CD4-positive, alpha-beta memory T cell (primary cell): ENCODE measurements at regions of chr15 and their contacts with region 1.

Region 1: GRCh38 chr15:64430000-64430735 is 30.2 kb upstream of the ZNF609 start:
- DNase-seq: peak; percentile 75 to 85 (median 79)
- H3K4me3 ChIP-seq: peak overlapping the region; percentile 18 to 25
- H3K4me3 Mint-ChIP-seq: peak overlapping the region; percentile 56 to 79 (median 76)
- H3K27ac ChIP-seq: peak overlapping the region; percentile 44
- H3K27ac Mint-ChIP-seq: peak overlapping the region; percentile 87 to 97 (median 91)
- H3K4me1 ChIP-seq: peaks cover 47% of the 10 kb centered on the region
- H3K4me1 Mint-ChIP-seq: peaks cover 31 to 49% (median 45%) of the 10 kb centered on the region in 4 donors
- H3K27me3 ChIP-seq: no peaks in the 10 kb centered on the region
- H3K27me3 Mint-ChIP-seq: no peaks in the 10 kb centered on the region

Region 2: DNA sequence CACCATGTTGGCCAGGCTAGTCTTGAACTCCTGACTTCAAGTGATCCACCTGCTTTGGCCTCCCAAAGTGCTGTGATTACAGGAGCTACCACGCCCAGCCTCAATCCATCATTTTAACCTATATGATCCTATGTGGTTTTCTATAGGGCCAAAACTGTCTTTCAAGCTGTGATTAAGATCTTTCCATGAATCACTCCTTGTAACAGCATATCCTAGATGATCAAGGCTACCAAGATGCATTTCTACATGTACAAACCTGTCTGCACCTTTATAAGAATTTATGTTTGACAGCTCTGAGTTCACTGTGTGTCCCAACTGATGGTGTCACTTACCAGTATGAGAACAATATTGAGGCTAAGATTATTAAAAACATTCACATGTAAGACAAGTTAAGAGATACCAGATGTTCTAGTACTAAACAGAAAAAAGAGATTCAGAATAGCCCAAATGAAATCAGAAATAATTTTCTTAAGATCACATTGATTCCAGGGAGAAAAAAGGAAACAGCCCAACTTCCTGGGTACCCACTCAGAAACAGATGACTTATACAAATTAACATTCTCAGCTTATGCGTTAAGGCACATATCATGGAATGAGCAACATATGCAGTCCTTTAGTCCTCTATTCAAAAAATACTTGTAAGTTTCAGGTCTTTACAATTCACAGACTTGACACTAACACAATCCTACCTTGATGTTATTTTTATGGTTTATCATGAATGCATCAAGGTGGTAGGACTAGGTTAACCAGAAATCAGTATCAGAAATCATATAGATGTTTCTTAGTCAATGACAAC is 242.6 kb before region 1 on chr15:
- CTCF ChIA-PET with region 1: no interaction called
- POLR2A ChIA-PET with region 1: no interaction called
- intact Hi-C with region 1: no loop called
- DNase-seq: no peak
- H3K4me3 ChIP-seq: no peak overlapping the region
- H3K4me3 Mint-ChIP-seq: peak overlapping the region in 6 of 8 donors; percentile 55 to 79 (median 69)
- H3K27ac ChIP-seq: no peak overlapping the region
- H3K27ac Mint-ChIP-seq: peak overlapping the region in 5 of 7 donors; percentile 37 to 83 (median 74)
- H3K4me1 ChIP-seq: no peaks in the 10 kb centered on the region
- H3K4me1 Mint-ChIP-seq: peaks cover 7 to 18% (median 10%) of the 10 kb centered on the region in 4 donors
- H3K27me3 ChIP-seq: no peaks in the 10 kb centered on the region
- H3K27me3 Mint-ChIP-seq: no peaks in the 10 kb centered on the region

Region 3: DNA sequence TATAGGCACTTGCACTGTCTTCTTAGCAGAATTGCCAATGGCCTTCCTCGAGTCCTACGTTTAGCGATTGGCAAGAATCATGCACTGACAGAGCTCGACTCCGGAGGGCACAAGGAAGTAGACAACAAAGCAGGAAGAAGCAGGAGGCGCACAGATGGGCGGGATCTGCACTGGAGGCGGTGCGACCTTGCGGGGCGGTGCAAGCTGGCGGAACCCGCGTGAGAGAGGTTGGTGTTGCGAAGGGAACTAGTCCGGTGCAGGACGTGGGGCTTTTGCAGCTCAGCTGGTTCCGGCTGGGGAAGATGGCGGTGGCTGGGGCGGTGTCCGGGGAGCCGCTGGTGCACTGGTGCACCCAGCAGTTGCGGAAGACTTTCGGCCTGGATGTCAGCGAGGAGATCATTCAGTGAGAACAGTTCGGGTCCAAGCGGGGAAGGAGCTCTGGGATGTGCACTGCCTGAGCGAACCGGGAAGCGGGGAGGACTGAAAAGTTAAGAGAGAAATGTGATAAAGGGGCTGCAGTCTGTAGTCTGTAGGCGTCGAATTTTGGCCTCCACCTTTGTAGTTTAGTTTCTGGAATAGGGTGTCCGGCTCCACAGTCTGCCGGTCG is 42.5 kb before region 1 on chr15 and contains the start of gene TRIP4:
- CTCF ChIA-PET with region 1: interaction called, 3 read pairs
- POLR2A ChIA-PET with region 1: interaction called, 11 read pairs
- intact Hi-C with region 1: no loop called
- DNase-seq: peak; percentile 95 to 98 (median 96)
- H3K4me3 ChIP-seq: peak within 1 kb of the TSS; percentile 79 to 89
- H3K4me3 Mint-ChIP-seq: peak within 1 kb of the TSS; percentile 96 to 100 (median 98)
- H3K27ac ChIP-seq: peak within 1 kb of the TSS; percentile 64
- H3K27ac Mint-ChIP-seq: peak within 1 kb of the TSS; percentile 80 to 99 (median 96)
- H3K4me1 ChIP-seq: peaks cover 12% of the 10 kb centered on the region
- H3K4me1 Mint-ChIP-seq: peaks cover 16 to 19% (median 19%) of the 10 kb centered on the region in 4 donors
- H3K27me3 ChIP-seq: no peaks in the 10 kb centered on the region
- H3K27me3 Mint-ChIP-seq: no peaks in the 10 kb centered on the region
- total RNA-seq, gene TRIP4: 28.2 to 29.4 TPM

Region 4: GRCh38 chr15:64443747-64444621 is 13.8 kb after region 1 on chr15:
- CTCF ChIA-PET with region 1: no interaction called
- POLR2A ChIA-PET with region 1: interaction called, 3 read pairs
- intact Hi-C with region 1: loop called (anchors 1 kb)
- DNase-seq: no peak
- H3K4me3 ChIP-seq: no peak overlapping the region
- H3K4me3 Mint-ChIP-seq: peak overlapping the region in 7 of 8 donors; percentile 0 to 80 (median 57)
- H3K27ac ChIP-seq: no peak overlapping the region
- H3K27ac Mint-ChIP-seq: peak overlapping the region; percentile 58 to 91 (median 87)
- H3K4me1 ChIP-seq: peaks cover 41% of the 10 kb centered on the region
- H3K4me1 Mint-ChIP-seq: peaks cover 30 to 52% (median 43%) of the 10 kb centered on the region in 4 donors
- H3K27me3 ChIP-seq: no peaks in the 10 kb centered on the region
- H3K27me3 Mint-ChIP-seq: no peaks in the 10 kb centered on the region

Region 5: GRCh38 chr15:64460206-64460734 is 30.1 kb after region 1 on chr15 and contains the start of gene ZNF609:
- CTCF ChIA-PET with region 1: interaction called, 11 read pairs
- POLR2A ChIA-PET with region 1: interaction called, 32 read pairs
- intact Hi-C with region 1: loop called (anchors 1 kb)
- DNase-seq: peak; percentile 83 to 90 (median 85)
- H3K4me3 ChIP-seq: peak within 1 kb of the TSS; percentile 72 to 86
- H3K4me3 Mint-ChIP-seq: peak within 1 kb of the TSS; percentile 91 to 96 (median 94)
- H3K27ac ChIP-seq: peak within 1 kb of the TSS; percentile 60
- H3K27ac Mint-ChIP-seq: peak within 1 kb of the TSS; percentile 87 to 96 (median 95)
- H3K4me1 ChIP-seq: peaks cover 48% of the 10 kb centered on the region
- H3K4me1 Mint-ChIP-seq: peaks cover 41 to 71% (median 54%) of the 10 kb centered on the region in 4 donors
- H3K27me3 ChIP-seq: no peaks in the 10 kb centered on the region
- H3K27me3 Mint-ChIP-seq: no peaks in the 10 kb centered on the region
- total RNA-seq, gene ZNF609: 53.7 to 56.9 TPM

Region 6: DNA sequence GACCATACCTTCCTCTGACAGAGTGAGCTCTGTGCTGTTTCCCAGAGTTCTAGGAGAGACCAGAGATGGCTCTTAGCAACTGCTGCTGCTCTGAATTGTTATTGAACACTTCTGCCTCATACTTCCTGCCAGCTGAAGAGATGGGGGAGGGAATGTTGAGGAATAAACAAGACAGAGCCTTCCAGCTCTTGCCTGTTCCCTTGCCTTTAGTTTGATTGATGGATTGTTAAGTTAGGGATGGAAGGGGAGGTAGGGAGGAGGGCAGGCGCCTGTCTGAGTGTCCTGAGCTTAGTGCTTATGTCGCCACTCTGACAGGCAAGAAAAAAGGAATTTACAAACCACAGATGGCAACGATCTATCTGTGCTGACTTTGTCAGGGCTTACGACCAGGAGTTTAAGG is 73.0 kb after region 1 on chr15:
- CTCF ChIA-PET with region 1: interaction called, 3 read pairs
- POLR2A ChIA-PET with region 1: interaction called, 11 read pairs
- intact Hi-C with region 1: no loop called
- DNase-seq: peak in 1 of 5 donors; percentile 20
- H3K4me3 ChIP-seq: peak overlapping the region; percentile 23 to 30
- H3K4me3 Mint-ChIP-seq: peak overlapping the region; percentile 49 to 80 (median 68)
- H3K27ac ChIP-seq: peak overlapping the region; percentile 52
- H3K27ac Mint-ChIP-seq: peak overlapping the region; percentile 68 to 94 (median 84)
- H3K4me1 ChIP-seq: peaks cover 82% of the 10 kb centered on the region
- H3K4me1 Mint-ChIP-seq: peaks cover 68 to 91% (median 80%) of the 10 kb centered on the region in 4 donors
- H3K27me3 ChIP-seq: no peaks in the 10 kb centered on the region
- H3K27me3 Mint-ChIP-seq: no peaks in the 10 kb centered on the region

Region 7: DNA sequence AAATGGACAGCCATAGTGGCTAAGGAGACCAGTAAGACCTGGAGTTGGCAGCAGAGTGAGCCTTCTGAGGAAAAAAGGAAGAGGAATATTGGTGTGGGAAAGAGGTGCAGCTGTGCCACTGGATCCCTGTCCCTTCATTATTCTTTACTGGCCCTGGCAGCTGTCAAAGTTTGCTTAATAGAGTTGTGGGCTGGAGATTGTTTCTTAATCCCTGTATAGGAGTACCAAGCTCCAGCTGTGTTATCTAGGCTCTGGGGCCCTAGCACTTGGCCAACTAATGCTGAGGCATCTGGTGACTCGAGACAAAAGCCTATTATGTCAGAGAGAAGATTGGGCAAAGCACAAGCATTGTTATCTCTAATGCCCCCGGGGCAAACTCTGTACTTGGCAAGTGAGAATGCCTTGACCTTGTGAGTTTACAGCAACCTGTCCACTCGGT is 91.6 kb after region 1 on chr15:
- CTCF ChIA-PET with region 1: no interaction called
- POLR2A ChIA-PET with region 1: no interaction called
- intact Hi-C with region 1: no loop called
- DNase-seq: no peak
- H3K4me3 ChIP-seq: no peak overlapping the region
- H3K4me3 Mint-ChIP-seq: peak overlapping the region in 1 of 8 donors; percentile 23
- H3K27ac ChIP-seq: no peak overlapping the region
- H3K27ac Mint-ChIP-seq: peak overlapping the region in 3 of 7 donors; percentile 33 to 81 (median 43)
- H3K4me1 ChIP-seq: peaks cover 28% of the 10 kb centered on the region
- H3K4me1 Mint-ChIP-seq: peaks cover 41 to 67% (median 54%) of the 10 kb centered on the region in 4 donors
- H3K27me3 ChIP-seq: no peaks in the 10 kb centered on the region
- H3K27me3 Mint-ChIP-seq: no peaks in the 10 kb centered on the region

Region 8: DNA sequence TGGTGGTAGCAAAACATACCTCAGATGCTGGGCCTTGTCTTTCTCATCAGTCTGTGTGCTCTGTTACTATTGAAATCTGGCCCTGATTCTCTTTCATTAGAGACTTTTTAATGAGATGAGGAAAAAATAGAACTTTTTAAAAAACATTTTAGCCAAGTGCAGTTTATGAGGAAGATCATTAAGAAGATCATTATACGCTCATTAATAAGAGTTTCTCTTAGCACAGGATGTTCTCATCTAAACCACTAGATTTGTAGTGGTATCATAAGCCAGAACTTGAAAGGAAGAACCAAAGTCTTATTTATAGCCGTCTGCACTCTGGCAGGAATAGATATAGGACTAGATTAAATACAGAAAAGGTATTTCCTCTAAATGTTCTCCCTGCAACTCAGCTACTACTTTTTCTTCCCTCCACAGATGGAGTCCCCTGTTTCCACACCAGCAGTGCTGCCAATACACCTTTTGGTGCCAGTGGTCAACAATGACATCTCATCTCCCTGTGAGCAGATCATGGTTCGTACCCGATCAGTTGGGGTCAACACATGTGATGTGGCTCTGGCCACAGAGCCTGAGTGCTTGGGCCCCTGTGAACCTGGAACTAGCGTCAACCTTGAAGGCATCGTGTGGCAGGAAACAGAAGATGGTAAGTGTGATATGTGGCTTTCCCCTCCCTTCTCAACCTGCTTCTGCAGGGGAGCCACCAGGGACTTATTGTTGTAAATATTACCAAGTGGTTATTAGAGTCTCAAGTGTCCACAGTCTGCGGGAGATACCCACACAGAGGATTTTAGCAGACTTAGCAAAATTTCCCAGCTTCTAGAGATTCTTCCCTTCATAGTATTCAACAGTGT is 192.5 kb after region 1 on chr15:
- CTCF ChIA-PET with region 1: interaction called, 3 read pairs
- POLR2A ChIA-PET with region 1: interaction called, 5 read pairs
- intact Hi-C with region 1: loop called (anchors 1 kb)
- DNase-seq: peak; percentile 76 to 84 (median 81)
- H3K4me3 ChIP-seq: peak overlapping the region in 1 of 2 donors; percentile 48
- H3K4me3 Mint-ChIP-seq: peak overlapping the region; percentile 66 to 85 (median 77)
- H3K27ac ChIP-seq: peak overlapping the region; percentile 34
- H3K27ac Mint-ChIP-seq: peak overlapping the region; percentile 83 to 96 (median 93)
- H3K4me1 ChIP-seq: peaks cover 96% of the 10 kb centered on the region
- H3K4me1 Mint-ChIP-seq: peaks cover 66 to 94% (median 84%) of the 10 kb centered on the region in 4 donors
- H3K27me3 ChIP-seq: no peaks in the 10 kb centered on the region
- H3K27me3 Mint-ChIP-seq: no peaks in the 10 kb centered on the region

Region 9: GRCh38 chr15:64681424-64682024 is 251.4 kb after region 1 on chr15:
- CTCF ChIA-PET with region 1: interaction called, 35 read pairs
- POLR2A ChIA-PET with region 1: interaction called, 3 read pairs
- intact Hi-C with region 1: loop called (anchors 2 kb)
- DNase-seq: no peak
- H3K4me3 ChIP-seq: no peak overlapping the region
- H3K4me3 Mint-ChIP-seq: no peak overlapping the region
- H3K27ac ChIP-seq: no peak overlapping the region
- H3K27ac Mint-ChIP-seq: peak overlapping the region in 4 of 7 donors; percentile 22 to 68 (median 48)
- H3K4me1 ChIP-seq: no peaks in the 10 kb centered on the region
- H3K4me1 Mint-ChIP-seq: peaks cover 0 to 7% (median 3%) of the 10 kb centered on the region in 4 donors
- H3K27me3 ChIP-seq: no peaks in the 10 kb centered on the region
- H3K27me3 Mint-ChIP-seq: no peaks in the 10 kb centered on the region